ENCODE measurements at regions of chr6 and their contacts with region 1.

Region 1: DNA sequence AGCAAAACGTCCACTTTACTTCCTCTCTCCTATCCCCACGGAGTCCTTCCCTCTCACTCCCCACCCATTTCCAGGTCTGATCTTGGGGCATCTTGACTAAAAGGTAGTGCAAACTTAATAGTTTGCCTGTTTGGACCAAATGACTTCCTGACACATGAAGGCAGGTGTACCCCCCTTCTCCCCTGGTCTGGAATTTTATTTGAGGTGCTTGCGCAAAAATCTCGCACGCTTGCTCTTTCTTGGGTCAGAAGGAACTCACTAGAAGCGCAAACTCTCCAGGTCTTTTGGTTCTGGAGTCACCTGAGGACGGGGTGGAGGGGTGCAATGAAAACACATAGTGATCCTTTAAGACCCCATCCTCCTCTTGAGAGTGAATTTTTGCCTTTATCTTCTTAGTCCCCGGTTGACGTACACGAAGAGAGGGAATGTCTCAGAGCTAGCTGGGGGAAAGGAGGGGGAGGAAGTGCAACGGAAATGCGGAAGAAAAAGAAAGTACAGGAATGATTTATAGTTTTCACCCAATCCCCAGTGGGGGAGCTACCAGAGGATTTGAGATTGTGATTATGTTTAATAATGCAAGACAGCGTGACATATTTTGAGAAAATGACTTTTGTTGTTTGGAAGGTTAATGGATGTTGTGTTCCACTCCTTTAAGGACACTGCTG is 4.9 kb downstream of the ADGRB3 start:
- DNase-seq: peak; percentile 86
- H3K4me3 ChIP-seq: peak overlapping the region; percentile 41
- H3K27ac ChIP-seq: peak overlapping the region; percentile 74
- H3K4me1 ChIP-seq: peaks cover 67% of the 10 kb centered on the region
- H3K27me3 ChIP-seq: no peaks in the 10 kb centered on the region
- CTCF ChIP-seq: no peak

Region 2: DNA sequence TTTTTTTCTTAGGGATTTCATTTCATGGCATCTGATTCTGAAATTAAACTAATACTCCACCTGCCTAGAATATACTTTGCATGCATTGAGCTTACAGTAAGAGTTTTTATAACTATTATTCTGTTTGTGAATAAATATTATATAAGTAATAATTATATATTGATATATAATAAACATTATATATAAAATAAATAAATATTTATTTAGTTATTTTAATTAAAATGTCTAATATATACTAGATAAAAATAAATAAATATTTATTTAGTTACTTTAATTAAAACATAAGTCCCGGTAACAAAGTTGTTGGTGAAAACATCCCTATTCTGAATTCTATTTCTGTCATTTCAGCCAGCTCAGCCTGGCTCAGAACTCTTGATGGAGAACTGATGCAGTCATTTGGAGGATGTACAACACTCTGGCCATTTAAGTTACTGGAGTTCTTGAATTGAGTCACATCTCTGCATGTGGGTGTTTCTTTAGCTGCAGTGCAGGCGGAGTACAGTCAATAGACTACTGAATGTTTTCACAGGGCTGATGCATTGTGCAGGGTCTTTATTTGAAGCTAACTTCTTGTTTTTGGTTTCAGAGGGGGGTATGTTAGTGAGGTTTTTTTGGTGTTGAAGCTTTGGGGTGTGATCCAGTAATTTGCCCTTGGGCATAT is 513.7 kb before region 1 on chr6:
- CTCF ChIA-PET with region 1: no interaction called
- POLR2A ChIA-PET with region 1: no interaction called
- intact Hi-C with region 1: no loop called
- DNase-seq: no peak
- H3K4me3 ChIP-seq: no peak overlapping the region
- H3K27ac ChIP-seq: no peak overlapping the region
- H3K4me1 ChIP-seq: no peaks in the 10 kb centered on the region
- H3K27me3 ChIP-seq: no peaks in the 10 kb centered on the region
- CTCF ChIP-seq: no peak

Region 3: GRCh38 chr6:68709882-68710281 is 69.9 kb after region 1 on chr6:
- CTCF ChIA-PET with region 1: no interaction called
- POLR2A ChIA-PET with region 1: no interaction called
- intact Hi-C with region 1: loop called (anchors 5 kb)
- DNase-seq: no peak
- H3K4me3 ChIP-seq: no peak overlapping the region
- H3K27ac ChIP-seq: peak overlapping the region; percentile 75
- H3K4me1 ChIP-seq: peaks cover 62% of the 10 kb centered on the region
- H3K27me3 ChIP-seq: no peaks in the 10 kb centered on the region
- CTCF ChIP-seq: no peak

Measured in A673 (cell line).